Heart left ventricle (tissue), 16 donors: ENCODE measurements at regions of chr19 and their contacts with region 1.

Region 1: DNA sequence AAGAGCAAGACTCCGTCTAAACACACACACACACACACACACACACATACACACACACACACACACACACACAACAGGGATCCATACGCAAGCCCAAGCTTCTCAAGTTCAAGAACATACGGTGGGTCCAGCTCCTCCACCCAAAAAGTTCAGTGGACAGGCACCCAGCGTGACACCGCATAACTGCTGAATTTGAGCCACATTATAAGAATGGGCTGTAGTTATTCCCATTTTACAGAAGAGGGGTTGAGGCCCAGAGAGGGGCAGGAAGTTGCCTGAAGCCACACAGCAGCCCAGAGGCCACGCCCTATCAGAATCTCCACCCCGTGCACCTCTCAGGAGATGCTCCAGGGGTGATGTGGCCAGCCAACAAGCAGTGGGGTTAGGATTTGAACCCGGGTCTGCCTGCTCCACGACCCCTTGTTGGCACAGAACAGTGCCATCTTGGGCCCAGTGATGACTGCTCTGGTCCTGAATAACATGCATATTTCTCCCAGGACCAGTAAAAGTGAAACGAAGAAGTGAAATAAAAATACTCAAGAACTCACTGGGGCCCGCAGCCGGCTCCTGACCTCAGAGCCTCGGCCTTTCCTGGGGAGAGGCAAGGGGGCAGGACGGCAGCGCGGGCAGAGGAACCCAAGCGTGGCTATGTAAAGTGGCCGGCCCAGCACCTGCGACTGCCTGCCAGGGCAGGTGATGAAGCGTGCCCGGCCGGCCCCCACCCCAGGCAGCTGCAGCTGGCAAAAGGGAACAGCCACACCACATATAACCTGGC is 61.9 kb downstream of the AP1M1 start:
- DNase-seq: peak in 2 of 5 donors; percentile 57 to 62
- ATAC-seq: peak in 1 of 4 donors; percentile 10
- H3K4me3 ChIP-seq: peak overlapping the region in 1 of 12 donors; percentile 15
- H3K27ac ChIP-seq: peak overlapping the region; percentile 82 to 99 (median 90)
- H3K4me1 ChIP-seq: peaks cover 3 to 55% (median 28%) of the 10 kb centered on the region in 12 donors
- H3K27me3 ChIP-seq: no peaks in the 10 kb centered on the region
- CTCF ChIP-seq: no peak
- POLR2A ChIP-seq: no peak

Region 2: DNA sequence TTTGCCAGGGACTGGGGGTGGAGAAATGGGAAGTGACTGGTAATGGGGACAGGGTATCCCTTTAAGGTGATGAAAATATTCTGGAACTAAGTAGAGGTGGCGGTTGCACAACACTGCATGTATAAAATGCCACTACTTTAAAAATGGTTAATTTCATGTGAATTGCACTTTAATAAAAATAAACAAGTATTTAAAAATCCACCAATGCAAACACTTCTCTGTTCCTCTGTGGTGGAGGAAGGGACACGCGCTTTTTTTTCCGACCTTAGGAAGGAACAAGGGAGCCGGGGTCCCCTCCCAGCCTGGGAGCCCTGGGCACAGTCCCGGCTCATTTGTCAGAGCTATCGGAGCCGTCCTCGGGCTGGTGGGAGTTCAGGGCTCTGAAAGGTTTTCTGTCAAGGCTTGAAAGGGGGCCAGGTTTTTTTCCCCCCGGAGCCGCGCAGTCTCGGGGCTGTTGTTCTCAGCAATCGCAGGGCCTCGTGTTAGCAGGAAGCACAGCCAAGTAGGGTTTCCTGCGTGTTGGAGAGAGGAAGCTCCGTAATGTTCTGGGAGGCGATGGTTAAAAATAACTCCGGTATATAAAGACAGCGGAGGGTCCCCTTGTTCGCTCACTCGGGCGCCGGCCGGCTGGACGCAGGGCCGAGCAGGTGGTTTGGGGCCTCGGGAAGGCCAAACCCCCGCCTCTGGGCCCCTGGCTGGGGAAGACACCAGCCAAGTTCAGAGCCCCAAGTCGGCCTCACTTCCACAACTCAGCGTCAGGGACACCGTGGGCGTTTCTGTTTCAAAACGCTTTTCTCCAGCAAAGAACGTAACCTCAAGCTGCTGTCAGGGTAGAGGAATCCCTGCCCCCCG is 23.9 kb after region 1 on chr19:
- intact Hi-C with region 1: loop called in 3 of 10 experiments (anchors 1 to 2 kb)
- DNase-seq: peak; percentile 87 to 92 (median 91)
- ATAC-seq: peak; percentile 89 to 93 (median 91)
- H3K4me3 ChIP-seq: peak overlapping the region in 9 of 12 donors; percentile 31 to 44 (median 34)
- H3K27ac ChIP-seq: peak overlapping the region; percentile 92 to 99 (median 97)
- H3K4me1 ChIP-seq: peaks cover 6 to 85% (median 46%) of the 10 kb centered on the region in 12 donors
- H3K27me3 ChIP-seq: no peaks in the 10 kb centered on the region
- CTCF ChIP-seq: no peak
- POLR2A ChIP-seq: peak; percentile 82 to 96

Region 3: DNA sequence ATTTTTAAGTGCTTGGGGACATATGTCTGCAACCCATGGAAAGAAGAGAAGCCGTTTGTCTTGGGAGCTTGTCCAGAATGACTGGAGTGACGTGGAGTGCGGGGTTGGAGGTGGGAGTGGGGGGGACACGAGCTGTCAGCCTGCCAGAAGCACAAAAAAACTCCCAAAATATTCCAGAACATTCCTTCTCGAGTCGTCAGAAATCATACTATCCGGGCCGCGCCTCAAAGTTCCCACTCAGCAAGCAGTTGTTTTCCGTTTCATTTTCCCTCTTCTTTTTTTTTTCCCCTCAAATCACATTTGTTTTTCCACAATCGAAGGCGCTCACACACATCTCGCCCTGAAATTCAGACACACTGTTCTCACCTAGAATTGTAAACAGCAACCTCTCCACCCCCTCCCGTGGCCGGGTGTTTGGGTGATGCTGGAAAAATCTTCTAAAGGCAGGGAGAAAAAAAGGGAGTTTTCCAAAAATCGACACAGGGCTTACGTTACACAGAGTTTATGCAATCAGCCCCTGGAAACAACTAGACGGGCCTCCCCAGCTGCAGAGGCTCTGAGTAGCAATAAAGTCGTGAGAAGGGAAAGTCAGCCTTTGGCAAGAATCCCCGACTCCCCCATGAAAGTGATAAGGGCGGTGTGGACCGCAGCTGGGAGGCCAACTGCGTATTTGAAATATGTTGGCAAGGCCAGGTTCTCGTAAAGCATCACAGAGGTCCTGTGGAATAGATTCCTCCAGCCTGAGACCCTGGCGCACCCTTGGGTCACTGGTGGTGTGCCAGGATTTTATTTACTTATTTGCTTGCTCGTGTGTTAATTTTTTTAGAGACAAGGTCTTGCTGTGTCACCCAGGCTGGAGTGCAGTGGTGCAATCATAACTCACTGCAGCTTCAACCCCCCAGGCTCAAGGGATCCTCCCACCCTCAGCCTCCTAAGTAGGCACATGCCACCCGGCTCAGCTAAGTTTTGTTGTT is 33.8 kb after region 1 on chr19:
- intact Hi-C with region 1: loop called in 1 of 10 experiments (anchors 5 kb)
- DNase-seq: peak in 4 of 5 donors; percentile 78 to 85 (median 84)
- ATAC-seq: peak; percentile 79 to 91 (median 86)
- H3K4me3 ChIP-seq: peak overlapping the region in 10 of 12 donors; percentile 4 to 47 (median 27)
- H3K27ac ChIP-seq: peak overlapping the region; percentile 79 to 97 (median 87)
- H3K4me1 ChIP-seq: peaks cover 0 to 45% (median 23%) of the 10 kb centered on the region in 12 donors
- H3K27me3 ChIP-seq: no peaks in the 10 kb centered on the region
- CTCF ChIP-seq: no peak
- POLR2A ChIP-seq: no peak

Region 4: GRCh38 chr19:16315825-16316505 is 56.4 kb after region 1 on chr19:
- intact Hi-C with region 1: loop called in 5 of 10 experiments (anchors 5 kb)
- DNase-seq: peak in 4 of 5 donors; percentile 68 to 75 (median 70)
- ATAC-seq: peak; percentile 54 to 76 (median 73)
- H3K4me3 ChIP-seq: peak overlapping the region in 1 of 12 donors; percentile 2
- H3K27ac ChIP-seq: peak overlapping the region; percentile 54 to 88 (median 77)
- H3K4me1 ChIP-seq: peaks cover 0 to 47% (median 27%) of the 10 kb centered on the region in 12 donors
- H3K27me3 ChIP-seq: no peaks in the 10 kb centered on the region
- CTCF ChIP-seq: no peak
- POLR2A ChIP-seq: no peak

Region 5: DNA sequence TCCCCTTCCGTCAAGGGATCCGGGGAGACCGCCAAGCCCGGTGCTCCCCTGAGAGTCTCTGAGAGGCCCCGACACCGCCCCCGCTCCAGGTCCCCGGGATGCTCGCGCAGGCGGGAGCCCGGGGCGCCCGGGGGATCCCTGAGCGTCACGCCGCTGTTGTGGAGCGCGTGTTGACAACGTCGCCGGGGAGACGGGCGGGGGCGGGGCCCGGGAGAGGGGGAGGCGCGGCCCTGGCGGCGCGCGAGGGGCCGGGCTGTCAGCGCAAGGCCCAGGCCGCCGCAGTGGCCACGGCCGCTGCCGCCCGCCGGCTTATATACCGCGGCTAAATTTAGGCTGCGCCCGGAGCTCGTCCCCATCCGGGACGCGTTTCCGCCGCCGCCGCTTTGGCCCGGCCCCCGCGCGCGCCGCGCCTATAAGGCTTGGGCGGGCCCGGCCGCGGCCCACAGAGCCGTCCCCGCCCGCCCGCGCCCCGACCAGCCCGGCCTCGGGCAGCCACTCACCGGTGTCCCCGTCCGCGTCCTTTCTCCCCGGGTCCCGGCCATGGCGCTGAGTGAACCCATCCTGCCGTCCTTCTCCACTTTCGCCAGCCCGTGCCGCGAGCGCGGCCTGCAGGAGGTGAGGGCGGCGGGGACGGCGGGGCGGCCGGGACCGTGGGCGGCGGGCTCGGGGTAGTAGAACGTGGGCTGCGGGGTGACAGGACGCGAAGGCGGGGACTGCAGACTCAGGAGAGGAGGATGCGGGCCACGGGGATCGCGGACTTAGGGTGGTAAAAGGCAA is 65.0 kb after region 1 on chr19 and contains the start of gene KLF2:
- intact Hi-C with region 1: loop called in 7 of 10 experiments (anchors 2 to 5 kb)
- DNase-seq: peak; percentile 96 to 97 (median 97)
- ATAC-seq: peak; percentile 71 to 92 (median 82)
- H3K4me3 ChIP-seq: peak within 1 kb of the TSS; percentile 64 to 99 (median 83)
- H3K27ac ChIP-seq: peak within 1 kb of the TSS; percentile 92 to 99 (median 98)
- H3K4me1 ChIP-seq: peaks cover 0 to 44% (median 25%) of the 10 kb centered on the region in 12 donors
- H3K27me3 ChIP-seq: no peaks in the 10 kb centered on the region
- CTCF ChIP-seq: no peak
- POLR2A ChIP-seq: peak; percentile 85 to 98
- total RNA-seq, gene KLF2: 28.0 to 87.2 (median 45.0) TPM

Region 6: DNA sequence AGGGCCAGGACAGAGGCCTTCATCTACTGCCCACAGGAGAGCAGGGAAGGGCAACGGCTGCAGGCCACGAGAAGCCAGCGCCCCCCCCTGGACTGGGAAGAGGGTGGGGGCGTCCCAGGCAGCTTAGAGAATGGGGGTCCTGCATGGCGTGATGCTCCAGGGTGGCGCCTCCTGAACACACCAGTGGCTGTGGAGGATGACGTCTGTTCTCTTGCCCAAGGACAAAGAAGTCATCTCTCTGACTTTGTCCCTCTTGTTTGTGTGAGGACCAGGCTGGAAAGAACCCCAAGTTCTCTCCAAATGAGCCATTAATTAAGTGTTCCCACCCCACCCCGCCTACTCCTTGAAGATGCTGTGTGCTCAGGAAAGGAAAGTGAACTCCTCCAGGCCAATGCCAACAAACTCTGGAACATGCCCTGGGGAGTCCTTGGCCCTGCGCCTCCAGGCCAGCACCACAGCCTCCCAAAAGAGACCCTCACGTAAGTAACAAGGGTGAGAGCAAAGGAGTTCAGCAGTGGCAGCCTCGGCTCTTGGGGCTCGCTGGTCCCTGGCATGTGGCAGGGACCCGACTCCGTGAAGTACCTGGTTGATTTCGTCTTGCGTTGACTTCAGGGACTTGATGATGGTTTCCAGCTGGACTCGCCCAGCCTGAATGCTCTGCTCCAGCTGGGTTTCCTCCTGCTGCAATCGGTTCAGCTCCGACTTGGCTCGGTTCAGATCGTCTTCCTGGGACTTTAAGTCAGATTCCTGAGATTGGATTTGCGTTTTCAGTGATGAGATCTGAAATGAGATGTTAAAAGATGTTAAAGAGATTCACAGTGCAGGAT is 143.8 kb after region 1 on chr19:
- intact Hi-C with region 1: no loop called
- DNase-seq: peak in 1 of 5 donors; percentile 53
- ATAC-seq: peak; percentile 25 to 53 (median 39)
- H3K4me3 ChIP-seq: no peak overlapping the region
- H3K27ac ChIP-seq: peak overlapping the region in 9 of 12 donors; percentile 14 to 80 (median 34)
- H3K4me1 ChIP-seq: peaks cover 0 to 24% (median 10%) of the 10 kb centered on the region in 12 donors
- H3K27me3 ChIP-seq: no peaks in the 10 kb centered on the region
- CTCF ChIP-seq: no peak
- POLR2A ChIP-seq: no peak